ENCODE measurements at regions of chr3 and their contacts with region 1.

Region 1: GRCh38 chr3:157201648-157202278 is 41.8 kb upstream of the CCNL1 start:
- DNase-seq: no peak
- ATAC-seq: peak in 2 of 4 donors; percentile 62 to 63
- H3K4me3 ChIP-seq: no peak overlapping the region
- H3K27ac ChIP-seq: peak overlapping the region in 1 of 12 donors; percentile 10
- H3K4me1 ChIP-seq: peaks cover 0 to 16% (median 4%) of the 10 kb centered on the region in 12 donors
- H3K27me3 ChIP-seq: no peaks in the 10 kb centered on the region
- CTCF ChIP-seq: peak; percentile 19 to 69 (median 55)
- POLR2A ChIP-seq: no peak

Region 2: DNA sequence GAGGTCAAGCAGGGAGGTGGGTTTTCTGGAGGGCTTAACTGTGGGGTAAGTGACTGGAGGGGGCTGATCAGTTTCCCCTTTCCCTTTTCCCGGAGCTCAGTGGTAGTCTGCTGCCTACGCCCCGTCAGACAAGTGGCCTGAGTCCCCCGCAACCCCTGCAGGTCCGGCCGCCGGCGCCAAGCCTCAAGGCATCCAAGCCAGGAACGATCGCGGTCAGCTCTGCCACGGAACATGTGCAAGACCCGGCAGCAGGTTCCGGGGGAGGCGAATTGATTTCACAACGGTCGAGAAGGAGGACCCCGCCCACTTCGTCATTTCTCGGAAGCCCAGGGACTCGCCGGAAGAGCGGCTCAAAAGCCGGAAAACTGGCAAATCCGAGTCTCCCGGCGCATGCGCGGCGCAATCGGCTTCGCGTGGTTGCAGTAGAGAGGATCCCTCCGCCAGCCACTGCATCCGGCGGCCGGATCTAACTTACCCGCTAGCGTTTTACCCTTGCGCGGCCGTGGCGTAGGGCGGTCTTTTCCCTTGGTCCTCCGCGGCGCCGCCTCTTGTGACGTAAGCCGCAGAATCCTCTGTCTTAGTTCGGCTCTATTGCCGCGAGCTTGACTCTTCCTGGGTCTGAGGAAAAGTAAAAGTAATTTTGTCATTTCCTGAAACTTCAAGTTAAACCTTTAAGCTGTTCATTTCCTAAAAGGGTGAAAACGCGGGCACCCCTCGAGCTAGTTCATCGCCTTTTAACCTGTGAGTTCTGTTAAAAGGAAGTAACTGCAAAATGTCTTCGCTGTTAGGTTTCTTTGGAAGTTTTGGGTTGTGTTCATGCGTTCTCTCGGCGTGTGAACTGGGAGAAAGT is 26.9 kb before region 1 on chr3:
- intact Hi-C with region 1: loop called in 1 of 10 experiments (anchors 2 kb)
- DNase-seq: peak; percentile 99 to 100 (median 99)
- ATAC-seq: peak; percentile 97 to 98 (median 97)
- H3K4me3 ChIP-seq: peak overlapping the region; percentile 15 to 79 (median 64)
- H3K27ac ChIP-seq: peak overlapping the region; percentile 91 to 98 (median 97)
- H3K4me1 ChIP-seq: peaks cover 0 to 38% (median 16%) of the 10 kb centered on the region in 12 donors
- H3K27me3 ChIP-seq: no peaks in the 10 kb centered on the region
- CTCF ChIP-seq: no peak
- POLR2A ChIP-seq: peak in 1 of 2 donors; percentile 78

Region 3: DNA sequence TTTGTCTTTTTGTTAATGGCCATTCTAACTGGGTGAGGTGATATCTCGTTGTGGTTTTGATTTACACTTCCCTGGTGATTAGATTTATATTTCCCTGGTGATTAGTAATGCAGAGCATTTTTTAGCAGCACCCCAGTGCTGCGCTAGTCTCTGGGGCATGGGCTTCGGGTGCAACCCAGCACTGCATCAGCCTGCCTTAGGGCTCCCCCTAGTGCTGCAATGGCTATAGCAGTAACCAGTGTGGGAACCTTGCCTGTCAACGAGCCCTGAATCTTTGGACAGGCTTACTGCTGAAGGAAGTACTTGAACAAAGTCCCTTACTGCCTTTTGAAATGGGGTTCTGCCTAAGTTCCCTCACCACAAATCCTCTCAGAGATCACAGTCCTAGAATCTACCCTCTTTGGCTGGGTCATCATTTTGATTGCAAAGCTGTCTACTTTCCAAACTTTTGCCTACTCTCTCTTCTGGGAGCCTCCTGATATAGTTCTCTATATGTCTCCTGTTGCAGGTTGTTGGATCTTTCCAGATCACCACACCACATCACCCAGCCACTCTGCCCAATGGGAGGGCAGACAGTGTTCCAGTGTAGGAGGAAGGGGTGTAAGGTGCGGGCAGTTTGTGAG is 37.4 kb after region 1 on chr3:
- intact Hi-C with region 1: loop called in 2 of 10 experiments (anchors 2 to 5 kb)
- DNase-seq: peak; percentile 58 to 74 (median 64)
- ATAC-seq: peak; percentile 83 to 96 (median 91)
- H3K4me3 ChIP-seq: no peak overlapping the region
- H3K27ac ChIP-seq: no peak overlapping the region
- H3K4me1 ChIP-seq: peaks cover 0 to 14% (median 0%) of the 10 kb centered on the region in 12 donors
- H3K27me3 ChIP-seq: no peaks in the 10 kb centered on the region
- CTCF ChIP-seq: peak; percentile 53 to 82 (median 64)
- POLR2A ChIP-seq: no peak

Region 4: DNA sequence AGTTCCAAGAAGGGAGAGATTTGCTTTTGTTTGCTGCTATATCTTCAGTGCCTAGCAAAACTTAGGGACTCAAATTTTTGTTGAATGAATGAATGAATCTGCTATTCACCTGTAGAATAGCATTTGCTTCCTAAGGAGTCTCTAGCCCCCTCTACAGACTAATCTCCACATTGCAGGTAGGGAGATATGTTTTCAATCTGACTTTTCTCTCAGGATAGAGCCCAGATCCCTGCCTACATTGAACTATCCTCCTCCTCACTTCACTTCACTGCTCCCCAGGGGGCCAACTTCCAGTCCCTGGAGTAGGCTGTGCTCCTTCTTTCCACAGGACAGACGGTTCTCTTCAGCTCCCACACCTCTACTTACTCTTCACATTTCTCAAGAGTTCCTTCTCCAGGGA is 153.0 kb after region 1 on chr3:
- intact Hi-C with region 1: loop called in 6 of 10 experiments (anchors 5 to 10 kb)
- DNase-seq: no peak
- ATAC-seq: no peak
- H3K4me3 ChIP-seq: no peak overlapping the region
- H3K27ac ChIP-seq: no peak overlapping the region
- H3K4me1 ChIP-seq: no peaks in the 10 kb centered on the region
- H3K27me3 ChIP-seq: no peaks in the 10 kb centered on the region
- CTCF ChIP-seq: peak in 10 of 12 donors; percentile 12 to 50 (median 26)
- POLR2A ChIP-seq: no peak

Region 5: DNA sequence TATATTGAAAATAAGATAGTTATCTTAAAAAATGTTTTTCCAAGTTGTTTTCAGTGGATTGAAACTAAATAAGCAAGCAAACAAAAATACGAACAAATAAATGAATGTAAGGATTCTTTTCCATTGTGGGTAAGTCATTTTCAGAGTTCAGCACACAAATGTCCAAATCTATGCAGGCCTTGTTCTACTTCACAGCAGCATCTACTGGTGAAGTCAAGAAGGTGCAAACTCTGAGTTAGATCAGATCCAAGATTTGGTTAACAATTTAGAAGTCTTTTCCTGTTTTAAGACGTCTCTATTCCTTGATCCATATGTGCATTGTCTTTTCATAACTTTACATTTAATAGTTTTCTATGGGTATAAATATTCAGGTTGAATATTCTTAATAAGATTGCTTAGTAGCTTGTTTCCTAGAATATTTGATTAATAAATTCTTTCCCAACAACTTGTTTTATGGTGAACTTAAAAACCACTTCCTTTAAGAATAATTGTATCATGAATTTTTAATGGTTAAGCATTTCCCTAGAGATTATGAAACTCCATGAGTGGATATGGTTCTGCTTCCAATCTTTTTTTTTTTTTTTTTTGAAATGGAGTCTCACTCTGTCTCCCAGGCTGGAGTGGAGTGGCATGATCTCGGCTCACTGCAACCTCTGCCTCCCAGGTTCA is 245.4 kb after region 1 on chr3:
- intact Hi-C with region 1: loop called in 2 of 10 experiments (anchors 5 kb)
- DNase-seq: no peak
- ATAC-seq: no peak
- H3K4me3 ChIP-seq: no peak overlapping the region
- H3K27ac ChIP-seq: no peak overlapping the region
- H3K4me1 ChIP-seq: peaks cover 0 to 14% (median 0%) of the 10 kb centered on the region in 12 donors
- H3K27me3 ChIP-seq: no peaks in the 10 kb centered on the region
- CTCF ChIP-seq: peak in 9 of 12 donors; percentile 22 to 60 (median 32)
- POLR2A ChIP-seq: no peak

Region 6: DNA sequence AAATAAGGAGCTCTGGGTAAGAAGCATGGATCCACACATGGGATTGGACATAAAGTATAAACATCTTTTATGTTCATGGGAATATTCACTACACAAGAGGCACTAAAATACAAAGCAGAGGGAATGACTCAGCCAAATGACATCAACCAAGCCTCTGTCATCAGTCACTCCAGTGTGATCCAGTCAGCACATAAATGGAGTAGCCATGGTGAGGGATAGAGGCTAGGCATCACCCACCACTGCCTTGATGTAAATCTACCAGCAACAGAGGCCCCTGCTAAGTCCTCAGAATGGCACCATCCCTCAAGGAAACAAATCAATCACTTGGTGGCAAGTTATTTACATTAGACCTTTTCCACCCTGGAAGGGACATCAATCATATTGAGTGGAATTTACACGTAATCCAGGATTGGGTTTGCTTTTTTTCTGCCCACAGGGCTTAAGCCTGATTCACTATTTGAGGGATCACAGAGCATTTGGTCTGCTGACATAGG is 274.2 kb after region 1 on chr3:
- intact Hi-C with region 1: no loop called
- DNase-seq: no peak
- ATAC-seq: no peak
- H3K4me3 ChIP-seq: no peak overlapping the region
- H3K27ac ChIP-seq: no peak overlapping the region
- H3K4me1 ChIP-seq: no peaks in the 10 kb centered on the region
- H3K27me3 ChIP-seq: no peaks in the 10 kb centered on the region
- CTCF ChIP-seq: no peak
- POLR2A ChIP-seq: no peak

Region 7: DNA sequence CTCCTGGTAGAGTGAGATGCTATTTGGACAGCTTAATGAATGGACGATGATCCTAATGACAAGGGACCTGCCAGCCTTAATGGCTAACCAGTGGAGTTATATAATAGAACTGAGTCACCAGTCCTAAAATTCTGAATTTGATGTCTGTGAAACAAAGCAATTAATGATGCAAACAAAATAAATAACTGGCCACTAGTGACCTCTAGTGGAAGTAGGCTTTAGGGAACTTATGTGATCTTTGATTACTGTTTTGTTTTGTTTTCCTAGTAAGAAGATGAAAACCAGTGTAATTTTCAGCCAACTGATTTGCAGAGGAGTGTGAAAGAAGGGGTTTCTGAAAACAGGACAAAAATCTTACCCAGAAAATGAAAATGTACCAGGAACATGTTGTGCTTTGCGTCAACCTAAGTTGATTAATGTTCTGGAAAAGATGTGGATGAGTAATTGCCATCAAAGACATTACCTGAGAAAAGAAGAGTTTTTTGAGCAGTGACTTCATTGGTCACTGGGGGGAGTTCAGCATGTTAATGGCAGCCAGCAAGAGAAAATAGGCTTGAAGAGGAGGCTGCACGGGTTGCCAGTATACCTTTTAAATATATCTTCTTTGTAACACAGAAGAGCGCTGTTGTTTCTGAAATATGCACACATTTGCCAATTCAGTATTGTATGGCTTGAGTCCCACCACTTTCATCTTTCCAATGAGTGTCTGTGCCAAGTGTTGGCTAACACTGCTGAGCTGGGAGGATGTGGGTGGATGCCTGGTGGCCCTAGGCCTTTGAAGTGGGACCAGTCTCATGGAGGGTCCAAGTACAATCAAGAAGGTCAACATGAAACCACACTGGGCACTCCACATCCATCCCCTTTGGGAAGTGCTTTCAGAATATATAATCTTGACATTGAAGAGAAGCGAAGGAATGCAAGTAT is 292.1 kb after region 1 on chr3:
- intact Hi-C with region 1: loop called (anchors 1 to 5 kb)
- DNase-seq: no peak
- ATAC-seq: peak in 2 of 4 donors; percentile 34 to 66
- H3K4me3 ChIP-seq: no peak overlapping the region
- H3K27ac ChIP-seq: no peak overlapping the region
- H3K4me1 ChIP-seq: no peaks in the 10 kb centered on the region
- H3K27me3 ChIP-seq: peaks cover 0 to 6% (median 0%) of the 10 kb centered on the region in 9 donors
- CTCF ChIP-seq: peak; percentile 47 to 77 (median 66)
- POLR2A ChIP-seq: no peak

Region 8: GRCh38 chr3:157572559-157573270 is 371.0 kb after region 1 on chr3:
- intact Hi-C with region 1: loop called in 2 of 10 experiments (anchors 5 to 10 kb)
- DNase-seq: no peak
- ATAC-seq: peak in 2 of 4 donors; percentile 52 to 66
- H3K4me3 ChIP-seq: no peak overlapping the region
- H3K27ac ChIP-seq: no peak overlapping the region
- H3K4me1 ChIP-seq: peaks cover 0 to 5% (median 0%) of the 10 kb centered on the region in 12 donors
- H3K27me3 ChIP-seq: no peaks in the 10 kb centered on the region
- CTCF ChIP-seq: peak; percentile 42 to 76 (median 60)
- POLR2A ChIP-seq: no peak

Region 9: GRCh38 chr3:157844800-157845565 is 643.2 kb after region 1 on chr3:
- intact Hi-C with region 1: no loop called
- DNase-seq: no peak
- ATAC-seq: no peak
- H3K4me3 ChIP-seq: no peak overlapping the region
- H3K27ac ChIP-seq: no peak overlapping the region
- H3K4me1 ChIP-seq: no peaks in the 10 kb centered on the region
- H3K27me3 ChIP-seq: no peaks in the 10 kb centered on the region
- CTCF ChIP-seq: no peak
- POLR2A ChIP-seq: no peak